CD4-positive, alpha-beta memory T cell (primary cell): ENCODE measurements at regions of chr5 and their contacts with region 1.

Region 1: DNA sequence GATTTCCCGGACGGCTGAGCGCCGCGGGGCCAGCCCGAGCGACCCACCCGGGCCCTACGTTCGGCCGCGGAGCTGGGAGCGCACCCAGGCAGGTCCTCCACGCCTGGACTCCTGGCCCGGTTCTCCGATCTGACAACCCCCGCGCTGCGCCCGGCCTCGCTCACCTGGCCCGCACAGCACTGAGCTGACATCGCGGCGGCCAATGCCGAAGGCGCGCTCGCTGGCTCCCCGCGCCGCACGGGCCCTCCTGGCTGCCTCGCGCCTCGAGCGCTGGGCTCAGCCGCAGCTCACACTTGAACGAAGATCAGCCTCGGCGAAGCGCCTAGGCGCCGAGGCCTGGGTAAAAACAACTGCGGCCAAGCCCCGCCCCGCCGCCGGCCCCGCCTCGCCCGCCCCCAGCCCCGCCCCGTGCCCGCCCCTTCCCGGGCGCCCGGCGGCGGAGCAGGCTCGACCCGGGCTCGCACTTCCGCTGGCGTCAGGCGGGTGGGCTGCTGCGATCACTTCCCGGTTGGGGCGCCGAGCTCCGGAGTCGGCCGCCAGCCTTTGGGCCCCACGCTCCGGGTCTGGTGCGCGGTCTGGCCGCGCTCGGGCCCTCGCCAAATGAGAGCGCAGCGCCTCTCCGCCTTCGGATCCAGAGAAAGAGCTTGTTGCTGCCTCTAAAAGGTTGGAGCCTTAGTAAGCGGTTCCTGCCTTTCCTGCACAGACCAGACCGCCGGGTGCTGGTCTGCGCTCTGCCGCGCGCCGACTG is at the start of gene SERINC5:
- DNase-seq: peak; percentile 82 to 88 (median 84)
- H3K4me3 ChIP-seq: peak within 1 kb of the TSS; percentile 73 to 80
- H3K4me3 Mint-ChIP-seq: peak within 1 kb of the TSS; percentile 92 to 100 (median 96)
- H3K27ac ChIP-seq: peak within 1 kb of the TSS; percentile 92
- H3K27ac Mint-ChIP-seq: peak within 1 kb of the TSS; percentile 88 to 99 (median 96)
- H3K4me1 ChIP-seq: peaks cover 40% of the 10 kb centered on the region
- H3K4me1 Mint-ChIP-seq: peaks cover 30 to 60% (median 50%) of the 10 kb centered on the region in 4 donors
- H3K27me3 ChIP-seq: no peaks in the 10 kb centered on the region
- H3K27me3 Mint-ChIP-seq: no peaks in the 10 kb centered on the region
- total RNA-seq, gene SERINC5: 153 to 165 TPM

Region 2: DNA sequence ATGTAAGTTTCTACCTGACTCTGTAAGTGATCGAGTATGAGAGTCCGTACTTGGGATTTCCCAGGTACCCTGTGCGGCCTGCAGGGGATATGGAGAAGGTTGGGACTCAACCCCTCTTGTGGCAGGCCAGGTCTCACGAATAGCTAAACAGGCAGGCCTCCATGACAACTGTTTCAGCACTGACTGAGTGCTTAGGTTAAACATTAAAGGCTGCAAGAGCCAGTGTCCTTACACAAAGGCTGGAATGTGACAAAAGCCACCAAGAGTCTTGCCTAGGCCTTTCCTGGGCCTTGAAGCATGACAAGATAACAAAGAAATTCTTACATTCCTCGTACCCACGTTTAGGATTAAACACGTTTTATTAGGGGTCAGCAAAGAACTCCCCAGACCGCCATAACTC is 162.1 kb before region 1 on chr5:
- CTCF ChIA-PET with region 1: interaction called, 27 read pairs
- POLR2A ChIA-PET with region 1: interaction called, 34 read pairs
- intact Hi-C with region 1: loop called (anchors 1 kb)
- DNase-seq: no peak
- H3K4me3 ChIP-seq: no peak overlapping the region
- H3K4me3 Mint-ChIP-seq: peak overlapping the region in 1 of 8 donors; percentile 34
- H3K27ac ChIP-seq: no peak overlapping the region
- H3K27ac Mint-ChIP-seq: peak overlapping the region; percentile 31 to 90 (median 87)
- H3K4me1 ChIP-seq: peaks cover 30% of the 10 kb centered on the region
- H3K4me1 Mint-ChIP-seq: peaks cover 20 to 47% (median 33%) of the 10 kb centered on the region in 4 donors
- H3K27me3 ChIP-seq: no peaks in the 10 kb centered on the region
- H3K27me3 Mint-ChIP-seq: no peaks in the 10 kb centered on the region

Region 3: GRCh38 chr5:80134879-80135278 is 121.0 kb before region 1 on chr5:
- CTCF ChIA-PET with region 1: interaction called, 13 read pairs
- POLR2A ChIA-PET with region 1: interaction called, 95 read pairs
- intact Hi-C with region 1: loop called (anchors 2 kb)
- DNase-seq: no peak
- H3K4me3 ChIP-seq: no peak overlapping the region
- H3K4me3 Mint-ChIP-seq: peak overlapping the region; percentile 7 to 87 (median 77)
- H3K27ac ChIP-seq: peak overlapping the region; percentile 54
- H3K27ac Mint-ChIP-seq: peak overlapping the region; percentile 69 to 97 (median 92)
- H3K4me1 ChIP-seq: peaks cover 86% of the 10 kb centered on the region
- H3K4me1 Mint-ChIP-seq: peaks cover 70 to 88% (median 80%) of the 10 kb centered on the region in 4 donors
- H3K27me3 ChIP-seq: no peaks in the 10 kb centered on the region
- H3K27me3 Mint-ChIP-seq: no peaks in the 10 kb centered on the region

Region 4: GRCh38 chr5:80165452-80165851 is 90.5 kb before region 1 on chr5:
- CTCF ChIA-PET with region 1: no interaction called
- POLR2A ChIA-PET with region 1: interaction called, 13 read pairs
- intact Hi-C with region 1: no loop called
- DNase-seq: no peak
- H3K4me3 ChIP-seq: no peak overlapping the region
- H3K4me3 Mint-ChIP-seq: peak overlapping the region in 1 of 8 donors; percentile 34
- H3K27ac ChIP-seq: no peak overlapping the region
- H3K27ac Mint-ChIP-seq: peak overlapping the region in 6 of 7 donors; percentile 29 to 82 (median 60)
- H3K4me1 ChIP-seq: peaks cover 38% of the 10 kb centered on the region
- H3K4me1 Mint-ChIP-seq: peaks cover 36 to 65% (median 53%) of the 10 kb centered on the region in 4 donors
- H3K27me3 ChIP-seq: no peaks in the 10 kb centered on the region
- H3K27me3 Mint-ChIP-seq: no peaks in the 10 kb centered on the region

Region 5: DNA sequence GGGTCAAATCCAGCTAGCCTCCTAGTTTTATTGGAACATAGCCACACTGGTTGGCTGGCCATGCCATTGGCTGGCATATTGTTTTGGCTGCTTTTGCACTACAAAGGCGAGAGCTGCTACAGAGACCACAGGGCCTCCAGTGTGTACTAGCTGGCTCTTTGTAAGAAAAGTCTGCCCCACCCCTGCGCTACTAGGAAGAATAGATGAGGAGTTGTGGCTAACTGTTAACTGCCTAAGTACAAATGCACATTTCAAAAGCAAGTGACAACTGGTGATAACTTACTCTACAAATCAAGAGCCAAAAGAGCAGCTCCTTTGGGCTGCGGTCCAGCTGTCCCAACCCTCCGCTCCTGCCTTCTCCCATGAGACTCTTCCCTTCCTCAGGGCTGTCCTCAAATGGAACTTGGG is 63.9 kb before region 1 on chr5:
- CTCF ChIA-PET with region 1: interaction called, 13 read pairs
- POLR2A ChIA-PET with region 1: interaction called, 409 read pairs
- intact Hi-C with region 1: loop called (anchors 5 kb)
- DNase-seq: peak; percentile 56 to 73 (median 58)
- H3K4me3 ChIP-seq: peak overlapping the region; percentile 9 to 37
- H3K4me3 Mint-ChIP-seq: peak overlapping the region; percentile 64 to 89 (median 80)
- H3K27ac ChIP-seq: peak overlapping the region; percentile 69
- H3K27ac Mint-ChIP-seq: peak overlapping the region; percentile 88 to 97 (median 92)
- H3K4me1 ChIP-seq: peaks cover 94% of the 10 kb centered on the region
- H3K4me1 Mint-ChIP-seq: peaks cover 68 to 93% (median 81%) of the 10 kb centered on the region in 4 donors
- H3K27me3 ChIP-seq: no peaks in the 10 kb centered on the region
- H3K27me3 Mint-ChIP-seq: no peaks in the 10 kb centered on the region

Region 6: GRCh38 chr5:80238778-80239679 is 16.9 kb before region 1 on chr5:
- CTCF ChIA-PET with region 1: interaction called, 5 read pairs
- POLR2A ChIA-PET with region 1: interaction called, 81 read pairs
- intact Hi-C with region 1: loop called (anchors 1 kb)
- DNase-seq: no peak
- H3K4me3 ChIP-seq: no peak overlapping the region
- H3K4me3 Mint-ChIP-seq: peak overlapping the region; percentile 27 to 87 (median 82)
- H3K27ac ChIP-seq: peak overlapping the region; percentile 20
- H3K27ac Mint-ChIP-seq: peak overlapping the region; percentile 63 to 93 (median 86)
- H3K4me1 ChIP-seq: peaks cover 78% of the 10 kb centered on the region
- H3K4me1 Mint-ChIP-seq: peaks cover 54 to 88% (median 70%) of the 10 kb centered on the region in 4 donors
- H3K27me3 ChIP-seq: no peaks in the 10 kb centered on the region
- H3K27me3 Mint-ChIP-seq: no peaks in the 10 kb centered on the region

Region 7: GRCh38 chr5:80308526-80308925 is 52.6 kb after region 1 on chr5:
- CTCF ChIA-PET with region 1: interaction called, 14 read pairs
- POLR2A ChIA-PET with region 1: interaction called, 5 read pairs
- intact Hi-C with region 1: no loop called
- DNase-seq: no peak
- H3K4me3 ChIP-seq: no peak overlapping the region
- H3K4me3 Mint-ChIP-seq: no peak overlapping the region
- H3K27ac ChIP-seq: no peak overlapping the region
- H3K27ac Mint-ChIP-seq: no peak overlapping the region
- H3K4me1 ChIP-seq: no peaks in the 10 kb centered on the region
- H3K4me1 Mint-ChIP-seq: peaks cover 0 to 1% (median 0%) of the 10 kb centered on the region in 4 donors
- H3K27me3 ChIP-seq: no peaks in the 10 kb centered on the region
- H3K27me3 Mint-ChIP-seq: no peaks in the 10 kb centered on the region